SK-N-SH (cell line): ENCODE measurements at regions of chr5 and their contacts with region 1.

Region 1: GRCh38 chr5:145903113-145903512 is 30.3 kb upstream of the GRXCR2 start:
- DNase-seq: no peak
- H3K4me3 ChIP-seq: no peak overlapping the region
- H3K27ac ChIP-seq: no peak overlapping the region
- H3K4me1 ChIP-seq: no peaks in the 10 kb centered on the region; a peak in 1 of 4 replicates
- H3K27me3 ChIP-seq: no peaks in the 10 kb centered on the region
- CTCF ChIP-seq: peak; percentile 43
- EP300 ChIP-seq: no peak
- RAD21 ChIP-seq: no peak

Region 2: GRCh38 chr5:145887976-145888574 is 15.0 kb before region 1 on chr5:
- CTCF ChIA-PET with region 1: interaction called, 11 read pairs
- POLR2A ChIA-PET with region 1: no interaction called
- DNase-seq: peak; percentile 33
- H3K4me3 ChIP-seq: no peak overlapping the region
- H3K27ac ChIP-seq: no peak overlapping the region
- H3K4me1 ChIP-seq: no peaks in the 10 kb centered on the region
- H3K27me3 ChIP-seq: no peaks in the 10 kb centered on the region
- CTCF ChIP-seq: peak; percentile 71
- EP300 ChIP-seq: no peak
- RAD21 ChIP-seq: peak; percentile 55